Ascending aorta (tissue), 2 donors: ENCODE measurements at regions of chr20 and their contacts with region 1.

Region 1: DNA sequence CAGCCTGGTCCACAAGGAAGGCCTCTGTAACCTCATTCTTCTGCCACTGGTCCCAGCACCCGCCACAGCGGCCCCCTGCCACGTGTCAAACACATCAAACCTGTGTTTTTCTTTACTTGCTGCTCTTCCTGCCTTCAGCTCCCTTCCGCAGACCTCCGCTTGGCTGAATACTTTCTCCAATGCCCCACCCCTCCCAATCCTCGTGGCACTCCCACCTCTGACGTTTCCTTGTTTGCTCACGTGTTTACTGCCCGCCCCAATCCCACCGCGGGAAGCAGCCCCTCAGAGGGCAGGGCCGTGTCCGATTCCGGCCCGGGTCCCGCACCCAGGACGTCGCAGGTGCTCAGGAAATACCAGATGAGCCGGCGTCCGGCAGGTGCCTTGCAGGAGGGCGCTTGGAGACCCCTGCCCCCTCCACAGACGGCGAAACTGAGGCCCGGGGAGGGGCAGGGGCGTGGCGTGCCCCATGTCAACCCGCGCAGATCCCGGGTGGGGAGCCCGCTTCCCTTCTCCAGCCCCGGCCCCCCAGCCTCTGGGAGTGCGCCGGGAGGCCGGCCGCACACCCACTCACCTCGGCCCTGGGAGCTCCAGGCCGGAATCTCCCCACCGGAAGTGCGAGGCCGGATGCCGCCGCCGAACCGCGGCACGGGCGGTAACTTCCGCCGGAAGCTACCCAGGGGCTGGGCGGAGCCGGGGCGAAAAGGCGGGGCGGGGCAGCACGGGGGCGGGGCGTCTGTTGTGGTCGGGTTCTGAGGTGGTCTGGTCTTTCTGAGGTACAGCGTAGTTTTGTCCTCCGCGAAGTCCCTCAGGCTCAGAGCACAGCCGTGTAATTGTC is 42.4 kb downstream of the ELMO2 start:
- DNase-seq: peak; percentile 65 to 93
- H3K4me3 ChIP-seq: peak overlapping the region; percentile 100
- H3K27ac ChIP-seq: peak overlapping the region; percentile 99 to 100
- H3K4me1 ChIP-seq: peaks cover 9 to 24% of the 10 kb centered on the region in 2 donors
- H3K27me3 ChIP-seq: no peaks in the 10 kb centered on the region
- CTCF ChIP-seq: no peak

Region 2: DNA sequence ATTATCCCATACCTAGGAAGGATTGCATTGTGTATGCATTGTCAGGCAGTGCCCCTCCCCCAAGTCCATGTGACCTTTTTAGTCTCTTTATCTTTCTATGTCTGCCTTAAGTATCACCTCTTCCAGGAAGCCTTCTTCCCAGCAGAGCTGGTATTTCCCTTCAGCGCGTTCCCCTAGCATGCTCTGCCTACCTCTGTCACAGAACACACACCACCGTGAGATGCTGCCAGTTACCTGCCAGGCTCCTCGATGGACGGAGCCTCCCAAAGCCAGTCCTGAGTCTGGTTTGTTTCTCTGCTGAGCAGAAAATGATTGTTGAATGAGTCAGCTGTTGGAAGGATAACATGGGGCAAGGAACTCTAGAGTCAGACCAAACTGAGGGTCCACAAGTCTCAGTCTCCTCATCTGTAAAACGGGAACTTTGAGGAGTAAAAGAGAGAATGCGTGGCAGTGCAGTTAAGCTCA is 380.7 kb before region 1 on chr20:
- intact Hi-C with region 1: no loop called
- DNase-seq: no peak
- H3K4me3 ChIP-seq: no peak overlapping the region
- H3K27ac ChIP-seq: no peak overlapping the region
- H3K4me1 ChIP-seq: no peaks in the 10 kb centered on the region
- H3K27me3 ChIP-seq: no peaks in the 10 kb centered on the region
- CTCF ChIP-seq: no peak

Region 3: DNA sequence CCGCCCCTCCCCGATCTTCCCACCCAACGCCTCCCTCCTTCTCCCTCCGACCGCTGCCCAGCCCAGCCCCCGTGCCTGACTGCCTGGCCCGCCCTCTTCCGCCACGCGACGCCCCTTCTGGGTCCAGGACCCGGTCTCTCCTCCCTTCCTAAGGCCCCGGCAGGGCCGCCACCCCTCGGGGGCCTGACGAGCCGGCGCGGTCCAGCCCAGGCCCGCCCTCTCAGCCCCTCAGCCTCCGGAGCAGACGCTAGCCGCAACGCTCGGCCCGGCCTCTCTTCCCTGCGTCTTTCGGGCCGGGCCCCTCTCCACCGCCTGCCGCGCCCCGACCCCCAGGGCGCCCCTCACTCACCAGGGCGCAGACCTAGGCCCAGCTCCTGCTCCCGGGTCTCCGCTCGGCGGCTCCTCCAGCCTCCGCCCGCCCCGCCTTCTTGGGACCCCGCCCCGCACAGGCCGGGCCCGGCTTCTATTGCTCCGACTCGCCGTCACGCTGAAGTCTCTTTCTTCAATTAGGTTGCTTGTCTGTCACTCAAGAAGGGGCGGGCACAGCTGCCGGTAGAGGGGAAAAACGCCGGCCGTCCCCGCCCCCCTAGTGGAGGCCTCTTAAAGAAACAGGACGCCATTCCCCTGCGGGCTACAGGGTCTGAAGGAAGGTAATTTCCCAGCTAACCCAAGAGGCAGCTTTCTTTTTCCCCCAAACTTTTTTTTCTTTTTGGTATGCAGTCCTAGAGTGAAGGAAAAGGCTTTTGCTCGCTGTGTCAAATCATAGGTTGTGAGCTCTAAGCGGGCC is 42.4 kb after region 1 on chr20 and contains the start of gene ELMO2:
- intact Hi-C with region 1: loop called (anchors 1 kb)
- DNase-seq: peak; percentile 94 to 99
- H3K4me3 ChIP-seq: peak within 1 kb of the TSS; percentile 87 to 88
- H3K27ac ChIP-seq: peak within 1 kb of the TSS; percentile 95 to 98
- H3K4me1 ChIP-seq: peaks cover 24 to 58% of the 10 kb centered on the region in 2 donors
- H3K27me3 ChIP-seq: no peaks in the 10 kb centered on the region
- CTCF ChIP-seq: peak in 2 of 3 experiments; percentile 17 to 30
- total RNA-seq, gene ELMO2: 77.5 TPM

Region 4: DNA sequence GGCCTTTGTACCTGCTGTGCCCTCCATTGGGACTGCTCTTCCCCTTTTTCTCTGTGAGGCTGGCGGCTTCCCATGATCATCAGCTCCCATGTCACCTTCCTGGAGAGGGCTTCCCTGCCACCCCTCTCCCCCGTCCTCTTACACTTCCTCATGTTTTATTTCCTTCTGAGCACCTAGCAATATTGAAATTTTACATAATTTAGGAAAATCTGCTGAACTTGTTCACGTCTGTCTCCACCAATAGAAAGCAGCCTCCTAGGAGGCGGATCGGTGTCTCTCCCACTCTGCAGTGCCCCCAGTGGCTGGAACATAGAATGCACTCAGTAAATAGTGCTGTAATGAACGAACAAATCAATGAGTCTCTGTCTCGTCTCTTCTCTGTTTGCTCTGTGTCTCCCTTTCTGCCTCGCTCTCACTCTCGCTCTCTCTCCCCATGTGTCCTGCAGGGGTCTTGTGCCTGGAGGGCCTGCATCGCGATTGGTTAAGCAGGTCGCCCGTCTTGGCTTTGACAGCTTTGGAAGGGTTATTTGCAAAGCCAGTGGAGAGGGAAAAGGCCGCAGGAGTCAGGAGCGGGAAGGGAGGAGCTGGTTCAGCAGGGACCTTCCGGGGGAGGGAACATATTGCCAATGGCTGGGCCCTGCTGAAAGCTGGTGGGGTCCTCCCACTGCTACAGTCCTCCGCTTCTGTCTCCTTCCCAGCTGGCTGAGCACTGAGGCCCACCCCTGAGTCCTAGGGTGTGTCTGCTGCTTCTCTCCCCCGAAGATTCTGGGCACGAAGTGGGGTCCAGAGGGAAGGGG is 198.6 kb after region 1 on chr20:
- intact Hi-C with region 1: loop called (anchors 5 kb)
- DNase-seq: peak in 1 of 2 donors; percentile 86
- H3K4me3 ChIP-seq: peak overlapping the region; percentile 37 to 54
- H3K27ac ChIP-seq: peak overlapping the region in 1 of 2 donors; percentile 22
- H3K4me1 ChIP-seq: peaks cover 0 to 4% of the 10 kb centered on the region in 2 donors
- H3K27me3 ChIP-seq: no peaks in the 10 kb centered on the region
- CTCF ChIP-seq: peak; percentile 54 to 91 (median 90)